Psoas muscle (tissue), 8 donors: ENCODE measurements at regions of chr19 and their contacts with region 1.

Region 1: DNA sequence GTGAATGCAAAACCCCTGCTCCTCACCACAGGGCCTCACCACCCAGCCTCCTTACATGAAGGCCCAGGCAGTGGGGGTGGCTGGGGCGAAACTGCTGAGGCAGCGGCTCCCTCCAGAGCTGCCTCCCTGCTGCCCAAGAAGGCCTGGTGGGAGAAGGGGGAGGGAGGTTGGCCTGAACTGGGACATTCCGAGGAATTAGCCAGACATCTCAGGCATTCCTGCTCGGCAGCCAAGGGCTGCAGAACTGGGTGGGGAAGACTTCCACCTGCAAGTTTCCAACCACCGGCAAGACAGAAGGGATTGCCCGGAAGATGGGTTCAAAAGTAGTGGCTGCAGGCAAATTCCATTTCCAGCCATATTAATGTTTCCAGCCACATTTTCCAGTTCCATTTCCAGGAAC is 2.3 kb upstream of the PSPN start:
- DNase-seq: no peak
- ATAC-seq: no peak
- H3K4me3 ChIP-seq: no peak overlapping the region
- H3K27ac ChIP-seq: no peak overlapping the region
- H3K4me1 ChIP-seq: peaks cover 5% of the 10 kb centered on the region
- H3K27me3 ChIP-seq: no peaks in the 10 kb centered on the region
- CTCF ChIP-seq: no peak

Region 2: DNA sequence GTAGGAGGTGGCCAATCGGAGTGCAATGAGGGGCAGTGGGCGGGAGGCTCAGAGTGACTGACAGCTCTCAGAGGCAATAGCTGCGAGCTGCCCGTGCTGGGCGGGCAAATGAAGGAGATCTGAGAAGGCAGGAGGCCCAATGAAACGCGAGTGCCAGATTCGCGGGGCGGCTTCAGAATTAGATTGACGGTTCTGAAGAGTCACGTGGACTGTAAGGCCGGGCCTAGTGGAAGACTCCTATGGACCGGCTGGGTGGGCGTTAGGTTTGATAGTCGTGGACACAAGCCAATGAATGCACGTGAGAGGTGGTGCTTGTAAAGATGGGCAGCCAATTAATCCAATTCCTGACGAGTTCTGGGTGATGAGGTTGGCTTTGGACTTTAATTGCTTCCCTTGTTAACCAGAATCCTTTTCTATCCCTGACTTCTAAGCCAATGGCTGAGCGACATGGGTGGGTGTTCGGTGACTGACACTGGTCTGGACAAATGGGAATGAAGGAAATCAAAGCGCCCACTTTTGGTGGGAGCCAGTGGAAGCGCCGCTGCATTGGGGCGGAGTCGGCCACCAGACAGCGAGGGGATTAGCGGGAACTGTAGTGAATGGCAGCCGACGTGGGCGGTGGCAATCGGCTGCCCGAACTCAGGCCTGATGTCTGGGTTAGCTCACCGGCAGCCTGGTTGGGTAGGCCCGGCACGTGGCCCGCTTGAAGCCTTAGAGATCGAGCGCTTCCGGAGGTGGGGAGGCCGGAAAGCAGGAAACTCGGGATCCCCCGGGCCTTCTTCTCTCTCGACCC is 47.1 kb after region 1 on chr19:
- intact Hi-C with region 1: loop called (anchors 5 kb)
- DNase-seq: peak; percentile 94 to 100
- ATAC-seq: peak; percentile 93 to 95 (median 94)
- H3K4me3 ChIP-seq: peak overlapping the region; percentile 93
- H3K27ac ChIP-seq: peak overlapping the region; percentile 86
- H3K4me1 ChIP-seq: peaks cover 16% of the 10 kb centered on the region
- H3K27me3 ChIP-seq: peaks cover 0 to 4% (median 0%) of the 10 kb centered on the region in 3 donors
- CTCF ChIP-seq: no peak

Region 3: DNA sequence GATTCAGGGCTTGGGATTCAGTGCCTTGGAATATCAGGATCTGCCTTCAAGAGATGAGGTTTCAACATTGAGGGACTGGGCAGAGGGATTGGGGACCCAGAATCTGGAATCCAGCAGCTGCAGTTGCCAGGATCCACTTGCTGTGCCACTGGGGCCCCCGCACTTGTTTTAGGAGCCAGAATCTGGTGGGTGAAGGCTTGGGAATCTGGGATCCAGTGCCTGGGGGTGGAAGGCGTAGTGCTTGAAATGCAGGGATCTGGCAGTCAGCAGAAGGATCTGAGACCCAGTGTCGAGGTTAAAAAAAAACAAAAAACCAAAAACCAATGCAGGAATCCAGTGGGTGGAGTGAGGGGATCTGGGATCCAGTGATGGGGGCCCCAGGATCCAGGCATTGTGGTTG is 62.9 kb after region 1 on chr19:
- intact Hi-C with region 1: no loop called
- DNase-seq: no peak
- ATAC-seq: no peak
- H3K4me3 ChIP-seq: no peak overlapping the region
- H3K27ac ChIP-seq: no peak overlapping the region
- H3K4me1 ChIP-seq: no peaks in the 10 kb centered on the region
- H3K27me3 ChIP-seq: no peaks in the 10 kb centered on the region
- CTCF ChIP-seq: no peak